ENCODE measurements at regions of chr11 and their contacts with region 1.

Region 1: DNA sequence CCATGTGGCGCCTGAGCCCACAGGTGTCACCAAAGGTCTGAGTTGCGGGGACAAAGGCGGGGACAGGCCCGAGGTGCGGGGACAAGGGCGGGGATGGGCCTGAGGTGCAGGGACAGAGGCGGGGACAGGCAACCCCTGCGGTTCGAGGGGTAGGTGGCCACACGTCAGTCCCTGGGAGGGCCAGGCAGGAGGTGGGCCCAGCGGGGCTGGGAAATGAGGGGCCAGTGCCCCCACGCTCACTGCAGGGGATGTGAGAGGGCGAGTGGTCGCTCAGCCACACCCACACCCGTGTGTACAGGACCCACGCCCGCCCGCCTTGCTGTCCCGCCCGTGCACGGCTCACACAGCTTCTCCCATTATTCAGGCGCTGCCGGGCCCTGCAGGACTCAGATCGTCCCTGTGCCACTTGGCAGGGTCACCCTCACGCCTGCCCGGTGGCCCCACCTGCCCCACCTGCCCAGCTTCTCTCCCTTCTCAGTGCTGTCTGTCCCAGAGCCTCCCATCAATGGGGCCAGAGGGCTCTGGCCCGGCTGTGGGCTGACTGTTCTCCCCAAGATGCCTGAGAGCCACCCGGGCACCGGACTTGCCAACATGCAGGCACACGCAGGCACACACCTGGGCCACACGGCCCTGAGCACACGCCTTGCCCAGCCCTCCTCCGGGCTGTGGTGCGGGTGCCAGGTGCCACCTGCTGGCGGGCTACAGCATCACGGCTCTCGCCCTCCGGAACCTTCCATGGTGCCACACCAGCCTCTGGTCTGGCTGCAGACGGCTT is 14.2 kb upstream of the MUC6 start:
- DNase-seq: peak; percentile 77

Region 2: GRCh38 chr11:848380-848931 is 202.3 kb before region 1 on chr11:
- intact Hi-C with region 1: loop called (anchors 2 kb)
- DNase-seq: peak; percentile 83

Region 3: DNA sequence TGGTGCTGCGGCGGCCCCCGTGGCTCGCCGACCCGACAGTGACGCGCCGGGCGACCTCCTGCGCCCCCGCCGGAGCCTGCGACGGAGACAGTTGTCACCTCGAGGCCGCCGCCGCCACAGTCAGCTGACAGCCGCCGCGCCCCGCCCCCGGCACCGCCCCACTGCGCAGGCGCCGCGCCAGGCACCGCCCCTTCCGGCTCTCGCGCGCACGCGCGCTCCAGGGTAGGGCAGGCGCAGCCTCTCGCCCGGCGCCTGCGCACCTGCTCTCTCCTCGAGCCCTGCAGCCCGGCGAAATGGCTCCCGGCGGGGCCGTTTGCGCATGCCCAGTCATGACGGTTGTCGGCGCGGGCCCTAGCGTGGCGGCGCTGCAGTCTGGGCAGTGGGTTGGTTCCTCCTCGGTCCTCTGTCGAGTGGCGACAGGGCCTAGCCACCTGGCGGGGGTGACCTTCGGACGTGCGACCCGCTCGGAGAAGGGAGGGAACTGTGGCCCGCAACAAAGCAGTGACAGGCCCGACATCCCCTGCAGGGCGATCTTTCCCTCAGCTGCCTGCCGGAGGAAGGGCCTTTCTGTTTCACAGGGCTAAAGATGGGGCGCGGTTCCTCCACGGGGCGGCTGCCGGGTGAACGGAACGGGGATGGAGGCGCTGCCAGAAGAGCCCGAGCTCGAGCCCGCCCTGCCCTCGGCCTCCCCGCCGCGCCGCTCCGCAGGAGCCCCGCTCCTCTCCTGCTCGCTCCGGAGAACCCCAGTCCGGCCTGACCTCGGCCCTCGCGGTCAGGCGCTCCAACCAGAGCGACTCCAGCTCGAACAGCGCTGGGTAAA is 258.9 kb after region 1 on chr11 and contains the start of gene TOLLIP:
- intact Hi-C with region 1: no loop called
- DNase-seq: peak; percentile 99
- total RNA-seq, gene TOLLIP: 46.9 TPM